HCT116 (cell line): ENCODE measurements at regions of chr3 and their contacts with region 1.

Region 1: DNA sequence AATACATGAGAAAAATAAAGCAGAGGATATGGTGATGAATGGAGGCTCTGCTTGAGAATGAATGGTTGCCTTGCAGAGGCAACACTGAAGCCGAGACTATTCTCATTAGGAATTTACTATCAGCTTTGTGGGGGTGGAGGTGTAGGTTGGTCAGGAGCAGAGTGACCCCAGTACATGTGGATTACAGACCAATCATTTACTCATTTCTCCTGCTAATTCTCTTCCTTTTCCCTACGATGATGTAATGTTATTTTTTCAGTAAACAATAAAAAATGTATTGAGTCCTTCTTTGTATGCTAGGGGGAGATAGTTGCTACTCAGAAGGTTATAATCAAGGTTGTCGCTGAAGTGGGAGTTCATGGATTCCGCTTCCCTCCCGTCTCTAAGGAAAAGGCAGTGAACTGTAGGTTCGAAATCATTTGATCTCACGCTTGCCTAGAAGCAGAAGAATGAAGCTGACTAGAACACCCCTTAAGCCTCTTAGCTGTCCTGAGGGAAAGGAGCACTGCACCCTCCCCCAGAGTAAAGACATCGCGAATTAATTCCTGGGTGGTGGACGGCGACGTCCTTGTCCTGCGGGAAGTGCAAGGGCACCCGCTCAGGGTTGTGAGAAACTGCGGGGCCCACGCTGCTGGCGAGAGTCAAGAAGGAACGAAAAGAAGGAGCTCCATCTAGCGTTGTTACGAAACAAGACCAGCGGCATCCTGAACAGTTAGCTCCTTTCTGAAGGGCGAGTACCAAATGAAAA is 213.2 kb upstream of the PFN2 start:
- DNase-seq: peak; percentile 70
- ATAC-seq: peak; percentile 98
- H3K4me3 ChIP-seq: peak overlapping the region; percentile 29 to 50
- H3K27ac ChIP-seq: no peak overlapping the region
- H3K4me1 ChIP-seq: peaks cover 5 to 15% of the 10 kb centered on the region in 2 experiments; a peak in 3 of 4 replicates
- H3K27me3 ChIP-seq: no peaks in the 10 kb centered on the region
- CTCF ChIP-seq: peak; percentile 62 to 70 (median 70); a peak in 5 of 6 replicates
- POLR2A ChIP-seq: no peak
- RAD21 ChIP-seq: peak; percentile 92

Region 2: DNA sequence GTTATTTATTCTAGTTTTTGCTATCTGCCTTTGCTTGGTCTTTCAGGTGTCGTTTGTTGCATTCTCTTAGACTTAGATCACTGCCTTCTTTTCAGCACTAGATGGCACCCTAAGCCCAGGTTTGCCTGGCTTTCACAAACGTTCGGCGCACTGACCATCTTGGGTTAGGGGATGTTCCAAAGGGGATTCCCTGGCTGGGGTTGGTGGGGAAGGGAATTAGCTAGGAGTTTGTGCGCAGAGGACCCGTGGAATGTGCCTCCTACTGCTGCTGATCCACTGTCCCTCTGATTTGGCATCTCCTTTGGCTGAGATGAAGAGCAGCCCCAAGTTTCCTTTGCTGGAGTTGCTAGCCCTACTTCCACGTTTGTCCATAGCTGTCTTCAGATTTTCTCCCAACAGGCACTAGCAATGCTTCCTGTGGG is 247.0 kb before region 1 on chr3:
- CTCF ChIA-PET with region 1: interaction called, 14 read pairs
- POLR2A ChIA-PET with region 1: no interaction called
- RAD21 ChIA-PET with region 1: no interaction called
- intact Hi-C with region 1: loop called (anchors 2 kb)
- DNase-seq: peak; percentile 31
- ATAC-seq: peak; percentile 90
- H3K4me3 ChIP-seq: no peak overlapping the region
- H3K27ac ChIP-seq: no peak overlapping the region
- H3K4me1 ChIP-seq: peaks cover 0 to 4% of the 10 kb centered on the region in 2 experiments; a peak in 1 of 4 replicates
- H3K27me3 ChIP-seq: no peaks in the 10 kb centered on the region
- CTCF ChIP-seq: peak; percentile 63 to 88 (median 80); a peak in 5 of 6 replicates
- POLR2A ChIP-seq: no peak
- RAD21 ChIP-seq: peak; percentile 84

Region 3: DNA sequence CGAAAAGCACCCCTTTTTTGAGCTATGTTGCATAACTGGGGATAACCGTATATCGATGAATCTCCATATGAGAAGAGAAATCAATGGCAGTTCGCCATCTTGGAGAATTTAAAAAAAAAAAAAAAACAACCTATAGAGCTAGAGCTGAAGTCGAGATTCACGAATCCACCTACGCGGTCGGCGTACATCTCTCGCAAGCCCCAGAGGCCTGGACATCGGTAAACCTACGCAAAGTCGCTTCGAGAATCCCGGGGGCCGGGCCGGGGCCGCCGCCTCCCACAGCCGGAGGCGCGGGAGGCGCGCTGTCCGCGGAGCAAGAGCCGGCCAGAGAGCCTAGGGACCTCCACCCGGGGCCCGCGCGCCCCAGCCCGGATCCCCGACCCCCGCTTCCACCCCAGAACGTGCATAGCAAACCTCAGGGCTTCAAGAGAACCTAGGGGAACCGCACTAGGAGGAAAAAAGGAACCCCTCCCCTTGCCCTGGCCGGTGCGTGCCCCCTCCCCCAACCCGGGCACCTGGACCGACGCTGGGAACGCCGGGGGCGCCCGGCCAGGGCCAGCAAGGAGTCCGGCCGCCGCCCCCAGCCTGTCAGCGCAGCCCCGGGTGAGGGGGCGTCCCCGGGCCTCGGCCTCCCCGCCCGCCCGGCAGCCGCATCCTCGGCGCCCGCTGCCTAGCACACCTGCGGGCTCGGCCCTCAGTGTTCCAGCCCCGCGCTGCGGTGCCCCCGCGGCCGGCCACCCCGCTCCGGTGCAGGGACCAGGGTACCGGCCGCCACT is 213.7 kb before region 1 on chr3:
- CTCF ChIA-PET with region 1: interaction called, 47 read pairs
- POLR2A ChIA-PET with region 1: interaction called, 5 read pairs
- RAD21 ChIA-PET with region 1: interaction called, 4 read pairs
- intact Hi-C with region 1: loop called (anchors 1 kb)
- DNase-seq: peak; percentile 73
- ATAC-seq: peak; percentile 58
- H3K4me3 ChIP-seq: peak overlapping the region; percentile 62 to 66
- H3K27ac ChIP-seq: peak overlapping the region; percentile 89
- H3K4me1 ChIP-seq: peaks cover 7 to 26% of the 10 kb centered on the region in 2 experiments; a peak in 3 of 4 replicates
- H3K27me3 ChIP-seq: no peaks in the 10 kb centered on the region
- CTCF ChIP-seq: no peak
- POLR2A ChIP-seq: no peak
- RAD21 ChIP-seq: no peak

Region 4: GRCh38 chr3:150238998-150239619 is 55.3 kb after region 1 on chr3:
- CTCF ChIA-PET with region 1: no interaction called
- POLR2A ChIA-PET with region 1: no interaction called
- RAD21 ChIA-PET with region 1: no interaction called
- intact Hi-C with region 1: no loop called
- DNase-seq: peak; percentile 56
- ATAC-seq: peak; percentile 92
- H3K4me3 ChIP-seq: no peak overlapping the region
- H3K27ac ChIP-seq: peak overlapping the region; percentile 16; the same call in 1 of the 2 replicates
- H3K4me1 ChIP-seq: peaks cover 22 to 37% of the 10 kb centered on the region in 2 experiments
- H3K27me3 ChIP-seq: no peaks in the 10 kb centered on the region
- CTCF ChIP-seq: peak; percentile 80 to 87 (median 81)
- POLR2A ChIP-seq: no peak
- RAD21 ChIP-seq: peak; percentile 91

Region 5: DNA sequence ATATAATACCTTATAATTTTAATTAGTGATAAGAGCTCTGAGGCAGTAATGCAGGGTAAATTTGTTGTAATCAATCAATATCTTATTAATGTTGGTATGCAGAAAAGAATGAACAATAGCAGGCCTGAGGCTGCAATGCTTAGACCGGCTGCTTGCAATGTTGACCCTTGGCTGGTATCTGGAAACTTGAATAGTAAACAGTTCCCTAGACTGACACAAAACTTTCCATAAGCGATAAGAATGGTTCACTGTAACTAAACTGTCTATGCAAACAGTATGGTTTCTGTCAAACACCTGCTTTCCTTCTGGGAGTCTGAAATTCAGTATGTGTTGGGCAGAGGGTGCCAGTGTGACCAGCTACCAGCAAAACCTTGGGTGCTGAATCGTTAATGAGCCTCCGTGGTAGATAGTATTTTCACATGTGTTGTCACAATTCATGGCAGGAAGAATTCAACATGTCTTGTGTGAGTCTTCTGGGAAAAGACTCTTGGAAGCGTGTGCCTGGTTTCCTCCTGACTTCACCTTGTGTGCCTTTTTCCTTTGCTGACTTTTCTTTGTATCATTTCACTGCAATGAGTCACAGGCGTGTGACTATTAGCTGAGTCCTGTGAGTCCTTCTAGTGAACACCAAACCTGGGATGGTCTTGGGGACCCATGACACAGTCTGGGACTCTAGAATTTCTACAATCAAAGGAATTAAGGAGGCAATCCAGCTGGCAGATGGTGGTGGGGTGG is 819.3 kb after region 1 on chr3:
- CTCF ChIA-PET with region 1: no interaction called
- POLR2A ChIA-PET with region 1: no interaction called
- RAD21 ChIA-PET with region 1: no interaction called
- intact Hi-C with region 1: no loop called
- DNase-seq: no peak
- ATAC-seq: peak; percentile 40; the same call in 1 of the 2 replicates
- H3K4me3 ChIP-seq: no peak overlapping the region
- H3K27ac ChIP-seq: no peak overlapping the region
- H3K4me1 ChIP-seq: peaks cover 0 to 8% of the 10 kb centered on the region in 2 experiments; a peak in 2 of 4 replicates
- H3K27me3 ChIP-seq: no peaks in the 10 kb centered on the region
- CTCF ChIP-seq: no peak
- POLR2A ChIP-seq: no peak
- RAD21 ChIP-seq: no peak